AG04450 (cell line): ENCODE measurements at regions of chr1 and their contacts with region 1.

Region 1: GRCh38 chr1:235504496-235505222 is 407 bp upstream of the B3GALNT2 start:
- DNase-seq: peak; percentile 98
- H3K4me3 ChIP-seq: peak overlapping the region; percentile 87
- H3K27ac ChIP-seq: peak overlapping the region; percentile 99
- H3K27me3 ChIP-seq: no peaks in the 10 kb centered on the region
- CTCF ChIP-seq: peak; percentile 77

Region 2: DNA sequence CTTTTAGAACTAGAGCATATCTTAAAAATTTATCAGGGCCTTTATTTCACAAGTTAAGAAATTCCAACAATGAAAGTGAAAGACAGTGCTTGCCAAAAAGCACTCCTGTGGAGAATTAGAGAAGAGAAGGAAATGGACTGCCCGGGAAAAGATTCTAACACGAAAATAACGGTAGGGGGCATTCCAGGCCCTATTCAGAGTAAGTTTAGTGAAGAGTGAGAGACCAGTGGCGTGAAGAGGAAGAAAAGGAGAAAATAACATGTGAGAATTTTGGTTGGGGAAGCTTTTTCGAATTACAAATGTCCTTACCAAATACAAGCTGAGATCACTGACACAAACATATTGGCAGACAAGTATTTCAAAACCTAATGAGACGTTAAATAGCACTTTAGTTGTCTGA is 305.2 kb before region 1 on chr1:
- CTCF ChIA-PET with region 1: interaction called, 10 read pairs
- POLR2A ChIA-PET with region 1: no interaction called
- DNase-seq: no peak
- H3K4me3 ChIP-seq: no peak overlapping the region
- H3K27ac ChIP-seq: no peak overlapping the region
- H3K27me3 ChIP-seq: no peaks in the 10 kb centered on the region
- CTCF ChIP-seq: peak; percentile 52

Region 3: GRCh38 chr1:235486321-235486720 is 18.3 kb before region 1 on chr1:
- CTCF ChIA-PET with region 1: interaction called, 11 read pairs
- POLR2A ChIA-PET with region 1: no interaction called
- DNase-seq: no peak
- H3K4me3 ChIP-seq: no peak overlapping the region
- H3K27ac ChIP-seq: no peak overlapping the region
- H3K27me3 ChIP-seq: no peaks in the 10 kb centered on the region
- CTCF ChIP-seq: no peak

Region 4: GRCh38 chr1:235583511-235584001 is 78.9 kb after region 1 on chr1:
- CTCF ChIA-PET with region 1: no interaction called
- POLR2A ChIA-PET with region 1: no interaction called
- DNase-seq: no peak
- H3K4me3 ChIP-seq: no peak overlapping the region
- H3K27ac ChIP-seq: no peak overlapping the region
- H3K27me3 ChIP-seq: peaks cover 22% of the 10 kb centered on the region
- CTCF ChIP-seq: no peak

Region 5: GRCh38 chr1:235601104-235601503 is 96.4 kb after region 1 on chr1:
- CTCF ChIA-PET with region 1: no interaction called
- POLR2A ChIA-PET with region 1: no interaction called
- DNase-seq: no peak
- H3K4me3 ChIP-seq: no peak overlapping the region
- H3K27ac ChIP-seq: no peak overlapping the region
- H3K27me3 ChIP-seq: no peaks in the 10 kb centered on the region
- CTCF ChIP-seq: peak; percentile 35

Region 6: DNA sequence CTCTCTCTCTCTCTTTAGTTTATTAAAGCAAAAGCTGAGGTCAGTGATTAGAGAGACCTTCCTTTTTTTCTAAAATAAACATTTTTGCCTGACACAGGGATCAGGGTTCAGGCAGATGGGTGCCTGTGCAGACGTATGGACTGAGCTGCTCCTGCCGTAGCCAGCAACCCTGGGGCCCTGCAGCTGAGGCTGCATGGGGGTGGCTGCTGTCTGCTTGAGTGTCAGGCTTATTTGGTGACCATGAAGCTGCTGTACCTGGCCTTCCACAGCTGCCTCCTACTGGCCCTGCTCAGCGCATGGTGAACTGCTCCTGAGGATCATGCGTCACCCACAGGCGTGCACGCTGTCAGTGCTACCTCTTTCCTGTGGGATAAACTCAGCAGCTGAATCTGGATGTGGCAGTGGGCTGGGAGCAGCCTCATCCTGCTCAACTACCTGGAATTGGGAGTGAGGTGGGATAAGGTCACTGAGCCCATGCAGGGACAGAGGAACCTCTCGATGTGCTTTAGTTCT is 109.8 kb after region 1 on chr1:
- CTCF ChIA-PET with region 1: no interaction called
- POLR2A ChIA-PET with region 1: no interaction called
- DNase-seq: no peak
- H3K4me3 ChIP-seq: no peak overlapping the region
- H3K27ac ChIP-seq: no peak overlapping the region
- H3K27me3 ChIP-seq: no peaks in the 10 kb centered on the region
- CTCF ChIP-seq: no peak

Region 7: DNA sequence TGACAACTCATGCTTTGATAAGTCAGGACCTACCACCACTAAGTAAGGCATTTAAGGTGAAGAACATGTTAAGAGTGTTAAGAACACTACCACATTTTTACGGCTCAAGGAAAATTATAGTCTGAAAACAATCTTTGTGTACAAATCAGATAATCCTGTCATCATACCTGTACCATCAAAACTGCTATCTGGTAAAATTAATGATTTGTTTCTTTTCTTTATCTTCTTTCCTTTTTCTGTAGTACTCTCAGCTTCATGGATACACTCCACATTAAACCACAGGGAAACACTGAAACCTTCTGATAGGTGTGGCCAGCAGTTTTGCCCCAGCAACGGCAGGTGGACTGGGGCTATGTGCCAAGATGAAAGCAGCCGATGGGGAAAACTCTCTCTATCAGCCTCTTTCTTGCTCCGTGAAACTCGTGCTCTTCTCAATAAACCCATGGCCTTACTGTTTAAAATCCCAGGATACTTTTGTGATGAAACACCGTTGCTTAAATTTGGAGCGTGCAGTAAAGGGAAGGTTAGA is 286.9 kb after region 1 on chr1:
- CTCF ChIA-PET with region 1: interaction called, 10 read pairs
- POLR2A ChIA-PET with region 1: no interaction called
- DNase-seq: no peak
- H3K4me3 ChIP-seq: no peak overlapping the region
- H3K27ac ChIP-seq: no peak overlapping the region
- H3K27me3 ChIP-seq: no peaks in the 10 kb centered on the region
- CTCF ChIP-seq: no peak